GM12878 (cell line): ENCODE measurements at regions of chr11 and their contacts with region 1.

Region 1: DNA sequence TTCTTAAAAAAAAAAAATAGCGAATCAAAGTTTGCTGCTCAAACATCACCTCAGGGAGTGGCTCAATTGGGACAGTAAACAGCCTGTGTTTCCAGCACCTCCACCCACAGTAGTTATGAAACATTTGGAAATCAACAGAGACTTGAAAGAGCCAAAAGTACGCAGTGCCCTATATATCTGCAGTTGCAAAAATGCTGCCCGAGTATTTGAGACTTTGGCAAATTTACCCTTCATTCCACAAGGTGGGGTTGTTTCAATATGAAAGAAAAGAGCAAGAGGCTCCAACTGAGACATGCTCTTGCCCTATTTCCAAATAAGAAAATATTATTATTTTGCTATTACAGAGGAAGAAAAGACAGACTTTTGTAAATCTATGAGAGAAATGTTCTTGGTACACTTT is 851.1 kb upstream of the RAG2 start:
- DNase-seq: no peak
- ATAC-seq: peak; percentile 74
- H3K4me3 ChIP-seq: no peak overlapping the region
- H3K27ac ChIP-seq: no peak overlapping the region
- H3K4me1 ChIP-seq: no peaks in the 10 kb centered on the region
- H3K27me3 ChIP-seq: no peaks in the 10 kb centered on the region
- CTCF ChIP-seq: peak; percentile 4 to 50 (median 29); a peak in 3 of 6 replicates
- EP300 ChIP-seq: no peak
- POLR2A ChIP-seq: no peak
- RAD21 ChIP-seq: peak; percentile 81

Region 2: GRCh38 chr11:37504060-37504611 is 55.0 kb after region 1 on chr11:
- CTCF ChIA-PET with region 1: no interaction called
- POLR2A ChIA-PET with region 1: no interaction called
- RAD21 ChIA-PET with region 1: interaction called, 4 read pairs
- SMC1A ChIA-PET with region 1: no interaction called
- in situ Hi-C with region 1: no loop called
- intact Hi-C with region 1: loop called (anchors 1 kb)
- DNase-seq: peak; percentile 78
- ATAC-seq: peak; percentile 93
- H3K4me3 ChIP-seq: no peak overlapping the region; the same call in 1 of the 2 replicates
- H3K27ac ChIP-seq: peak overlapping the region; percentile 34; the same call in 1 of the 2 replicates
- H3K4me1 ChIP-seq: peaks cover 18% of the 10 kb centered on the region
- H3K27me3 ChIP-seq: no peaks in the 10 kb centered on the region
- CTCF ChIP-seq: no peak
- EP300 ChIP-seq: peak; percentile 96 to 98
- POLR2A ChIP-seq: no peak
- RAD21 ChIP-seq: 0 out of 2 replicates have a peak, but pooled peaks have one; percentile 7

Region 3: DNA sequence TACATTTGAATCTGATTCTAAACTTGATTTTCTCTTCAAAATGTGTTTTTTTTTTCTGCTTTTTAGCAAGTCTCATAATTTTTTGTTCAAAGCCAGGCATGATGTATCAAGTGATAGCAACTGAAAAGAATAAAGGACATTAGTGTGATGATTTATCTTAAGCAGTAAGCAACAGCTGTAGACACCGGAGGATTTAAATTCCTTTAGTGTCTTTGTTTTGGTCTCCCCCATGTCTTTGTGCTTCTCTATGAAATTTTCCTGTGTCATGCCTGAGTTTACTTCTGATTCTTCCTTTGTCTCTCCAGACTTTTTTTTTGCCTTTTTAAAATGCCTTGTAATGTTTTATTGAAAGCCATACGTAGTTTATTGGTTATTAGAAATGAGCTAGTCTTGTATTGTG is 83.1 kb after region 1 on chr11:
- CTCF ChIA-PET with region 1: no interaction called
- POLR2A ChIA-PET with region 1: no interaction called
- RAD21 ChIA-PET with region 1: no interaction called
- SMC1A ChIA-PET with region 1: no interaction called
- in situ Hi-C with region 1: no loop called
- intact Hi-C with region 1: loop called (anchors 5 kb)
- DNase-seq: no peak
- ATAC-seq: no peak
- H3K4me3 ChIP-seq: no peak overlapping the region
- H3K27ac ChIP-seq: no peak overlapping the region
- H3K4me1 ChIP-seq: no peaks in the 10 kb centered on the region
- H3K27me3 ChIP-seq: no peaks in the 10 kb centered on the region
- CTCF ChIP-seq: no peak
- EP300 ChIP-seq: no peak
- POLR2A ChIP-seq: no peak
- RAD21 ChIP-seq: no peak

Region 4: DNA sequence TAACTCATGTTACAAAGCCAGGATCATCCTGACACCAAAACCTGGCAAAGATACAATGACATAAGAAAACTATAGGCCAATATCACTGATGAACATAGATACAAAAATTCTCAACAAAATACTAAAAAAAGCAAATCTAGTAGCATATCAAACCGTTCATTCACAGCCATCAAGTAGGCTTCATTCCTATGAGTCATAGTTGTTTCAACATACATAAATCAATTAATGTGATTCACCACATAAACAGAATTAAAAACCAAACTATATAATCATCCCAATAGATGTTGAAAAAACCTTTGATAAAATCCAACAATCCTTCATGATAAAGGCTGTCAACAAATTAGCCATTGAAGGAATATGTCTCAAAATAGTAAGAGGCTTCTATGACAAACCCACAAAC is 156.1 kb after region 1 on chr11:
- CTCF ChIA-PET with region 1: no interaction called
- POLR2A ChIA-PET with region 1: no interaction called
- RAD21 ChIA-PET with region 1: no interaction called
- SMC1A ChIA-PET with region 1: no interaction called
- in situ Hi-C with region 1: no loop called
- intact Hi-C with region 1: loop called (anchors 10 kb)
- DNase-seq: no peak
- ATAC-seq: no peak
- H3K4me3 ChIP-seq: no peak overlapping the region
- H3K27ac ChIP-seq: no peak overlapping the region
- H3K4me1 ChIP-seq: no peaks in the 10 kb centered on the region
- H3K27me3 ChIP-seq: no peaks in the 10 kb centered on the region
- CTCF ChIP-seq: no peak
- EP300 ChIP-seq: no peak
- POLR2A ChIP-seq: no peak
- RAD21 ChIP-seq: no peak